ENCODE measurements at regions of chr18 and their contacts with region 1.

Region 1: DNA sequence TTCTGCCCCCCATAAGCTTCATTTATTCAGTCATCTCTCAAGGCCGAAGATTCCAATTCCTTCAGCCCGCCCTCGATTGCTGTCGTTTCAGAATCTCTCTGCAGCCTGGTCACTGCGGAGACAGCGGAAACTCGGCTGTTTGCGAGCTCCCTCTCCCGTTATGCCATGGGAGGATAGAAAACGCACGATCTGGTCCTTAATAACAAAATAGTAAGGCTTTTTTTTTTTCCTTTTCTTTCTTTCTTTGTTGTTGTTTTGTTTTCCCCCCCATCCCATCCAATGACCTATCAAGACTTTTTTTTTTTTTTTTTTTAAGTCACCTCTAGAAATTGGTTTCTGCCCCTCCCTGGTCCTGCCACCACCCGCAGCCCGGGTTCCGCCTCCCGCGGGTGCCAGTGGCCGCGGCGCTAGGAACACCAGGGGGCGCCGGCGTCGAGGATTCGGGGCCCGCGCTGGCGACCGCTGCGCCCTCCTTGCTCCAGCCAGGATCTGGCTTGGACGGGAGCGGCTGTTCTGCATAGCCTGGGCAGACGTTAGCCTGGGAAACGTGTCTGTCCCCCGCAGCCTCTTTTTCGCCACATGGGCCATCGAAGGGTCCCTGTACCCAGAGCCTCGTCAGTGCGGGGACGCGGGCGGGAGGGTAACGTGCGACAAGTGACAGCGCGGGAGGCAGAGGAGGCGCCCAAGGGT is 10.1 kb downstream of the CPLX4 start:
- DNase-seq: peak; percentile 68 to 86 (median 78)
- H3K4me3 ChIP-seq: no peak overlapping the region
- H3K27ac ChIP-seq: no peak overlapping the region
- H3K4me1 ChIP-seq: no peaks in the 10 kb centered on the region
- H3K27me3 ChIP-seq: no peaks in the 10 kb centered on the region
- CTCF ChIP-seq: peak; percentile 57 to 76 (median 59)
- EP300 ChIP-seq: no peak
- POLR2A ChIP-seq: no peak

Region 2: DNA sequence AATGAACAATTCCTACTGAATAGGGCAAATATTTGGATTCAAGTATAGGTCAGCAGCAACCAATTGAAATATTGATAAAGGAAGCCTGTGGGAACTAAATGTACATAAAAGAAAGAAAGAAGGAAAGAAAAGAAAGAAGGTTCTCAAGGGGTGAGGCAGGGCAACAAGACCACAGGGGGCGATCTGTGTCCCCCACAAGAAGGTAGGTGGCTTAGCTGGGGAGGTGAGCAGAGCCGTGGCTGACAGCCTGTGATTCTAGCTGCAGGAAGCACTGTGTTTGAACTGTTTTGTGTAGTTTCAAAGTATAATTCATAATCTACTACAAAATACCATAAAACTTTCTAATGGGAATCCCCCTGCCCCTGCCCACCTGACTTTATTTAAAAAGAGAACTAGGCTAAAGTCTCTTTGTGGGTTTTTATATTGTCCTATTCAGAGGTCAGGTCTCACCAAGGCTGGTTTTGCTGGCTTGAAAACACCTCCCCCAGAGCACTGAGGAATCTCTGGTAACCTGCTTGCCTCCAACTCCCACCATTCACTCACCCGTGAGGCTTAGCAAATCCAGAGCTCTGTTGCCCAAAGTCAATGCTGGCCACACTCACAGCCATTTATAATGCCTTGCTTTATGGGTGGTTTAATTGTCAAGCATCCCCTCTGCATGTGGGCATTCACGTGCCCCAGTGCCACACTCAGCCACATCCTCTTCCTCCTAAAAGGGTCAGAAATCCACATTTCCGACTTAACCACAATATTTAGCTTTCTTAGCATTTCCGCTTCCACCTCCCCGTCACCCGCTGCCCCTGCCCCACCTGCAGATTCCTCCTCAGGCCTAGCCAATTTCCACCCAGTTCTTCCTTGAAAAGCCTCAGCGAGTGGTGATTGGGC is 87.1 kb after region 1 on chr18:
- intact Hi-C with region 1: loop called in 2 of 4 experiments (anchors 5 kb)
- DNase-seq: no peak
- H3K4me3 ChIP-seq: no peak overlapping the region
- H3K27ac ChIP-seq: no peak overlapping the region
- H3K4me1 ChIP-seq: no peaks in the 10 kb centered on the region
- H3K27me3 ChIP-seq: no peaks in the 10 kb centered on the region
- CTCF ChIP-seq: no peak
- EP300 ChIP-seq: no peak
- POLR2A ChIP-seq: no peak

Region 3: DNA sequence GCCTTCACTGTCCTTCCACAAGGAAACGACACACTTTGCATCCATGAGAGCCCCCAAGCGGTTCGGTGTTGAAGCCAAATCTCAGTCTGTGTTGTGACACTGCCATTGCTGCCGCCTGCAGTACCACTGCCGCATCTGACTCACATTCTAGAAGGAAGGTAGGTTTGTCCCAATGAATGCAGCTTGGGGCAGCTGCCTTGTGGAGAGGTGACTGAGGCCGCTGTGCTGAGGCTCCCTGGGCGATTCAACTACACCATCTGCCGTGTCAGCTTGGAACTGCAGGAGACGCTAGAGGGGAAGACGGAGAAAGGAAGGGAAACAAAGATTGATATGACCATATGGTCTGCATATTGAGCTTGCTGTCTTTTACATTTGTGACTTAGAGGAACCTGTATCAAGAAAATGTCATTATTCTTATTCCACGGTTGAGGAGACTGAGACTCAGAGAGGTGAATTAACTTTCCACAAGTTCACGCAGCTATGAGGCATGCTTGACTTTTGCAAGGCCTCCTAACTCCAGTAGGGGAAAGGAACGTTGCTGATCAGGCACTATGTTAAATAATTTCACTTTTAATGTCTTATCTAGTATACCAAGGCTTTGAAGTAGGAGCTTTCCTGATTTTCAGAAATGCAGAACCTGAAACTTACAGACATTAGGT is 94.2 kb after region 1 on chr18:
- intact Hi-C with region 1: loop called in 3 of 4 experiments (anchors 2 to 5 kb)
- DNase-seq: peak; percentile 31 to 72 (median 57)
- H3K4me3 ChIP-seq: no peak overlapping the region
- H3K27ac ChIP-seq: no peak overlapping the region
- H3K4me1 ChIP-seq: no peaks in the 10 kb centered on the region
- H3K27me3 ChIP-seq: no peaks in the 10 kb centered on the region
- CTCF ChIP-seq: peak; percentile 42 to 67 (median 57)
- EP300 ChIP-seq: no peak
- POLR2A ChIP-seq: no peak

Region 4: GRCh38 chr18:59419386-59419785 is 111.0 kb after region 1 on chr18:
- intact Hi-C with region 1: loop called in 1 of 4 experiments (anchors 10 kb)
- DNase-seq: no peak
- H3K4me3 ChIP-seq: no peak overlapping the region
- H3K27ac ChIP-seq: no peak overlapping the region
- H3K4me1 ChIP-seq: peaks cover 7% of the 10 kb centered on the region
- H3K27me3 ChIP-seq: no peaks in the 10 kb centered on the region
- CTCF ChIP-seq: no peak
- EP300 ChIP-seq: no peak
- POLR2A ChIP-seq: no peak

Region 5: DNA sequence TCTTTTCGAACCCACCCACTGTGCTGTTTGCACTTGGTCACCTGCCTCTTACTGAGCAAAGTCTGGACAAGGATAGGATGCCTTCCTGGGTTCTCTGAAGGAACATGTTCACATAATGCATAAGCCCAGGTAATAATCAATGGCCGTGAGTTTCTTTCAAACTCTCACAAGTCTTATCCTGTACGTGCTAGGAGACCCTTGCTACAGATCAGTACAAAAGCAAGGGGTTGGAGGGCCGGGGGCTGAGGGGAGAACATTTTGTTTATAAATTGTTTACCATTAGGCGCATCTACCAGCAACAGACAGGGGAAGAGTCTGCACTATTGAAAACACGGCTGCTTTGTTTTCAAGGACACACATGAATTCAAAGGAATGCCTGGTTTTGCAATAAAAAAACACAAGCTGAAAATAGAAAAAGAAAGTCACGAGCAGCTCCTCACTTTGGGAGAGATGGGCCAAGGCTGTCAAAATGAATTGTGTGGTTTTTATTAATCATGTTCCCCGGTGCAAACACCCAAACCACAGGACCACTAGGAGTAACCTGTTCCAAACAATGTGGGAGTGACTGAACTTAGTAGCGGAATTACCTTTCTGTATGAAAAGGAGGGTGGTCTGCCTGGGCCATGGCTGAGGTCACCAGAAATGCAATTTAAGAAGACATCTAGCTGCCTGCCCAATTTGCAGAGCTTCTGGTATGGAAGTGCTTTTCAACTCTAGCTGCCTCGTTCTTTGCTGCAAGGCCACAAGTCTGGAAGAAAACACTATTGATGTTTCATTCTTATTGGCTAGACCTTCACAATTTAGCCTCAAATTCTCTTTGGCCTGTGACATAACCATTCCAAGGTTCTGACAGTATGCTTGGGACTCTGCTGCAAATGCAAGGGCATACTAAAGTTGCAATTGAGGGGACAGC is 315.3 kb after region 1 on chr18:
- intact Hi-C with region 1: no loop called
- DNase-seq: peak in 2 of 5 donors; percentile 45 to 52
- H3K4me3 ChIP-seq: no peak overlapping the region
- H3K27ac ChIP-seq: peak overlapping the region; percentile 65 to 77
- H3K4me1 ChIP-seq: peaks cover 28% of the 10 kb centered on the region
- H3K27me3 ChIP-seq: no peaks in the 10 kb centered on the region
- CTCF ChIP-seq: no peak
- EP300 ChIP-seq: peak; percentile 5
- POLR2A ChIP-seq: no peak

Region 6: GRCh38 chr18:59823596-59824195 is 515.3 kb after region 1 on chr18:
- intact Hi-C with region 1: loop called in 1 of 4 experiments (anchors 5 kb)
- DNase-seq: peak; percentile 68 to 88 (median 80)
- H3K4me3 ChIP-seq: no peak overlapping the region
- H3K27ac ChIP-seq: no peak overlapping the region
- H3K4me1 ChIP-seq: peaks cover 3% of the 10 kb centered on the region
- H3K27me3 ChIP-seq: no peaks in the 10 kb centered on the region
- CTCF ChIP-seq: peak; percentile 78 to 89 (median 85)
- EP300 ChIP-seq: no peak
- POLR2A ChIP-seq: no peak

Measured in ovary (tissue), 10 donors.